ENCODE measurements at regions of chr11 and their contacts with region 1.

Region 1: GRCh38 chr11:8964324-8965320 is at the start of gene TMEM9B:
- DNase-seq: peak; percentile 50 to 84 (median 71)
- ATAC-seq: peak; percentile 66 to 82
- H3K4me3 Mint-ChIP-seq: peak within 1 kb of the TSS; percentile 94 to 100 (median 98)
- H3K27ac Mint-ChIP-seq: peak within 1 kb of the TSS; percentile 97 to 99 (median 98)
- H3K4me1 Mint-ChIP-seq: peaks cover 16 to 43% (median 37%) of the 10 kb centered on the region in 4 donors
- H3K27me3 Mint-ChIP-seq: no peaks in the 10 kb centered on the region
- polyA plus RNA-seq, gene TMEM9B: 80.3 to 103 (median 90.6) TPM

Region 2: GRCh38 chr11:8682303-8683114 is 282.1 kb before region 1 on chr11 and contains the starts of genes RPL27A and TRIM66:
- POLR2A ChIA-PET with region 1: interaction called, 20 read pairs
- DNase-seq: peak; percentile 97 to 99 (median 99)
- ATAC-seq: peak; percentile 93 to 95
- H3K4me3 Mint-ChIP-seq: peak within 1 kb of the TSS; percentile 86 to 97 (median 95)
- H3K27ac Mint-ChIP-seq: peak within 1 kb of the TSS; percentile 96 to 99 (median 98)
- H3K4me1 Mint-ChIP-seq: peaks cover 25 to 52% (median 44%) of the 10 kb centered on the region in 4 donors
- H3K27me3 Mint-ChIP-seq: no peaks in the 10 kb centered on the region
- polyA plus RNA-seq, gene RPL27A: 4,481 to 4,848 (median 4,520) TPM
- polyA plus RNA-seq, gene TRIM66: 0.14 to 0.53 (median 0.18) TPM

Region 3: DNA sequence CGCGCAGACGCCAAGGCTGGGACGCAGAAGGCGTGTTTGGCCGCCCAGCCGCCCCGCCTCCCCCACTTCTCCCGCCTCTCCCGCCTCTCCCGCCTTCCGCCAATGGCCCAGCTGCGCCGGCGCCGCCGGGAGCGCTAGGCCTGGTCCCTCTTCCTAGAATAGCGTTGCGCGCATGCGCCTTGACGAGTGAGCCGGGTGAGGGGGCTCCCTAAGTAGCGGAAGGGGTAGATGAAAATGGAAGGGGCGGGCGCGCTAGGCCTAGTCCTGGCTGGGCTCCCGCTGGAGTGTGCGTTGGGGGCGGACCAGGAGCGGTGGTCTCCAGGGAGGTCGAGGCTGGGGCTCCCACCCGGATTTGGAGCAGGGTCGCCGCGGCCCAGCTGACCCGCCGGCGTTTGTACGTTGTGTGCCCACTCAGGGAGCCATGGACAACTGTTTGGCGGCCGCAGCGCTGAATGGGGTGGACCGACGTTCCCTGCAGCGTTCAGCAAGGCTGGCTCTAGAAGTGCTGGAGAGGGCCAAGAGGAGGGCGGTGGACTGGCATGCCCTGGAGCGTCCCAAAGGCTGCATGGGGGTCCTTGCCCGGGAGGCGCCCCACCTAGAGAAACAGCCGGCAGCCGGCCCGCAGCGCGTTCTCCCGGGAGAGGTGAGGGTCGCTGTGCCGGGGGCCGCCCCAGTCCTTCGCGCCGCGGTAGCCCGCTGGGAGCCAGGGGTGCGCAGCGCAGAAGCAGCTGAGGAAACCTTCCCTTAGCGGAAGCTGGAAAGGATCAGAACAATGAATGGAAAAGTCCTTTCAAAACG is 53.4 kb before region 1 on chr11 and contains the start of gene AKIP1:
- POLR2A ChIA-PET with region 1: interaction called, 23 read pairs
- DNase-seq: peak; percentile 67 to 93 (median 77)
- ATAC-seq: peak; percentile 73 to 79
- H3K4me3 Mint-ChIP-seq: peak within 1 kb of the TSS; percentile 87 to 98 (median 93)
- H3K27ac Mint-ChIP-seq: peak within 1 kb of the TSS; percentile 83 to 96 (median 93)
- H3K4me1 Mint-ChIP-seq: peaks cover 16 to 46% (median 42%) of the 10 kb centered on the region in 4 donors
- H3K27me3 Mint-ChIP-seq: no peaks in the 10 kb centered on the region
- polyA plus RNA-seq, gene AKIP1: 14.9 to 18.0 (median 15.7) TPM

Measured in naive thymus-derived CD8-positive, alpha-beta T cell (primary cell).